ENCODE measurements at regions of chr14 and their contacts with region 1.

Region 1: DNA sequence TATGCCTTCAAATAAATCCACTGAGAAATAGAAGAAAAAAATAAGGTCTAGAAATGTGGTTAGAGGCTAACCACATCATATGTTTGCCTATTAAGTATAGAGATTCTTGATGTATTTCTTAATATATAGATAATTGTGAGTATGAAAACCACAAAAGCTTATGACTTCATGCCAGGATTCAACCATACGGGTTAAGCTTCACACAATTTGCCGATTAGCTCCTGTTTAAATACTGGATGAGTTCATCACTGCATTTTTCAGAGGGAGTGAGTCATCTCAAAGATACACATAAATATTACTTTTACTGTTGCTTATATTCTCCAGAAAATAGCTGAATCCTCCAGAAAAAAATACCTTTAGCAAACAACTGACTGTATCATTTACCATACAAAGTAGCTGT is 79.6 kb downstream of the RPL10L start:
- DNase-seq: peak; percentile 59
- H3K4me3 ChIP-seq: no peak overlapping the region
- H3K27ac ChIP-seq: peak overlapping the region; percentile 55
- H3K4me1 ChIP-seq: peaks cover 40% of the 10 kb centered on the region
- H3K27me3 ChIP-seq: no peaks in the 10 kb centered on the region
- CTCF ChIP-seq: no peak
- POLR2A ChIP-seq: no peak

Region 2: GRCh38 chr14:47207617-47208016 is 635.6 kb after region 1 on chr14:
- CTCF ChIA-PET with region 1: no interaction called
- POLR2A ChIA-PET with region 1: no interaction called
- dilution Hi-C with region 1: no loop called
- intact Hi-C with region 1: loop called (anchors 10 kb)
- DNase-seq: peak; percentile 59
- H3K4me3 ChIP-seq: no peak overlapping the region
- H3K27ac ChIP-seq: no peak overlapping the region
- H3K4me1 ChIP-seq: peaks cover 10% of the 10 kb centered on the region
- H3K27me3 ChIP-seq: no peaks in the 10 kb centered on the region
- CTCF ChIP-seq: peak in 1 of 2 donors; percentile 9
- POLR2A ChIP-seq: no peak

Region 3: GRCh38 chr14:47226877-47227520 is 655.0 kb after region 1 on chr14:
- CTCF ChIA-PET with region 1: no interaction called
- POLR2A ChIA-PET with region 1: no interaction called
- dilution Hi-C with region 1: no loop called
- intact Hi-C with region 1: loop called (anchors 2 kb)
- DNase-seq: peak; percentile 85
- H3K4me3 ChIP-seq: peak overlapping the region in 1 of 3 experiments; percentile 13
- H3K27ac ChIP-seq: peak overlapping the region; percentile 69
- H3K4me1 ChIP-seq: peaks cover 35% of the 10 kb centered on the region
- H3K27me3 ChIP-seq: no peaks in the 10 kb centered on the region
- CTCF ChIP-seq: no peak
- POLR2A ChIP-seq: no peak

Region 4: GRCh38 chr14:47235619-47236018 is 663.6 kb after region 1 on chr14:
- CTCF ChIA-PET with region 1: no interaction called
- POLR2A ChIA-PET with region 1: no interaction called
- dilution Hi-C with region 1: no loop called
- intact Hi-C with region 1: loop called (anchors 2 kb)
- DNase-seq: peak; percentile 59
- H3K4me3 ChIP-seq: no peak overlapping the region
- H3K27ac ChIP-seq: peak overlapping the region; percentile 41
- H3K4me1 ChIP-seq: peaks cover 18% of the 10 kb centered on the region
- H3K27me3 ChIP-seq: no peaks in the 10 kb centered on the region
- CTCF ChIP-seq: no peak
- POLR2A ChIP-seq: no peak

Measured in endothelial cell of umbilical vein (primary cell).